ENCODE measurements at regions of chr1 and their contacts with region 1.

Region 1: DNA sequence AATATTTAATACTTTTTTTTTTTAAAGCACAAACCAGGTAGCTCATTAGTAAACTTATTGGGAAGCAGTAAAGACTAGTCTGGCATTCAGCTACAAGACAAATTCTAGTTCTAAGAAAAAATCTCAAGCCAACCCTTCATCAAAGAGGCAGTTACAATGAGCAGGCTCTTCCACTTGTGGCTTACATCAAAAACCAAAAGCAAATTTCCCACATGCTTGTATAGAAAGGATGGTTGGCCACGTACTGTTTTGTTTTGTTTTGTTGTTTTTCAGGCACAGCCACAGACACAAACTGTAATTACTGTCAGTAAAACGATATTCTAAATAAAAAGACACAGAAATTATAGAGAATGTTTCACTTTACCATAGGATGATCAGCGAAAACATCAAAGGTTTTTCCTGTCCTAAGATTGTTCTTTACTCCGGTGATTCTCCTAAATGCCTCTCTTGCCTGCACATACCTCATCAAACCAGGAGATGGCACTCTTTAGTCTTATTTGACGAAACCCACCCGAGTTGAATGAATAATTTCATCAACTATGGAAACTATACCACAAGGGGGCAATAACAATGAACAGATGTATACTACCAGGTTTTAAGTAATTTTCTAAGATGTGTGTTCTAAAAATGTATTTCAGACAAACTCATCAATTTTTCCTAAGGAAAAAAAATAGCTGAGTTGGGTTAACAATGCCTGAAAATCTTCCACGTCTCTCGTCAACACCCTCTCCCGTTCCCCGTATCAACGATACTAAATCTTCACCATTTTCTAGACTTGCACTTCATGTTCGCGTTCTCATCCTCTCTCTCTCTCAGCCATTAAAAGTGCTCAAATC is 26.9 kb downstream of the RPL5 start:
- DNase-seq: peak; percentile 39
- H3K4me3 Mint-ChIP-seq: peak overlapping the region; percentile 7
- H3K27ac Mint-ChIP-seq: peak overlapping the region; percentile 0
- H3K4me1 Mint-ChIP-seq: peaks cover 19% of the 10 kb centered on the region
- H3K27me3 Mint-ChIP-seq: no peaks in the 10 kb centered on the region

Region 2: DNA sequence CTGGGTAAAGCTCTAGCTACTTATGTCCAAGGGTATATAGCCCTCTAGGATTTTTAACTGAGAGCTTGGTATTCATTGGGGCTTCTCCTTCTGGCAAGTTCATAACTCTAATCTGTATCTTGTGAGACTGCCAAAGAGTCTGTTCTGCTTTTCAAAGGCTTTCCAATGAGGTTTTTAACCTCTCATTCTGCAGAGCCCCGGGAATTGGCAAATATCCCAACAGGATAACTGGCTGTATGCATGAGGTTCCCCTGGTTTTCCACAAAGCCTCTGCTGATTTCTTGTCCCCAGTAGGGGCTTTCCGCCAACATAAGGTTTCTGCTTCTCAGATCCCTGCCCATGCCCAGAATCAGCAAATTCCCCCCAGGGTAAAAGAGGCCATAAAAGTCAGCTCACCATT is 13.9 kb after region 1 on chr1:
- CTCF ChIA-PET with region 1: interaction called, 20 read pairs
- POLR2A ChIA-PET with region 1: no interaction called
- intact Hi-C with region 1: loop called (anchors 1 kb)
- DNase-seq: no peak
- H3K4me3 Mint-ChIP-seq: no peak overlapping the region
- H3K27ac Mint-ChIP-seq: no peak overlapping the region
- H3K4me1 Mint-ChIP-seq: peaks cover 22% of the 10 kb centered on the region
- H3K27me3 Mint-ChIP-seq: no peaks in the 10 kb centered on the region

Region 3: DNA sequence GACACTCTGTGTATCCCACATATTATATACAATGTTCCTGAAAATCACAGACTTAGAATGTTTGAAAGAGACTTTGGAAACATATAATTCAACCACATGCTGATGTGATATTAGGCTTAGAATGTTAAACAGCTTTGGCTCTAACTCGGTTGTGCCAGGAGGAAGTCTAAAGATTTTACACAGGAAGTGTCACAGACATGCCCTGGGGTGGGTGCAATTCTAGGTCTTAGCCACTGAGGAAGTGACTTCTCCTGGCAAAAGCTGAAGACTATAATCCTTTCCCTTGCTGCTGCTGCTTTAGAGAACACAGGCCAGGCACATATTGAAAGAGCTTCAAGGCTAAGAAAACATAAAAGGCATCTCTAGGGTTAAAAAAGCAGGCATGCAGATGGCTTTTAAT is 24.0 kb after region 1 on chr1:
- CTCF ChIA-PET with region 1: interaction called, 20 read pairs
- POLR2A ChIA-PET with region 1: no interaction called
- intact Hi-C with region 1: no loop called
- DNase-seq: peak; percentile 42
- H3K4me3 Mint-ChIP-seq: no peak overlapping the region
- H3K27ac Mint-ChIP-seq: peak overlapping the region; percentile 64
- H3K4me1 Mint-ChIP-seq: peaks cover 32% of the 10 kb centered on the region
- H3K27me3 Mint-ChIP-seq: no peaks in the 10 kb centered on the region

Region 4: DNA sequence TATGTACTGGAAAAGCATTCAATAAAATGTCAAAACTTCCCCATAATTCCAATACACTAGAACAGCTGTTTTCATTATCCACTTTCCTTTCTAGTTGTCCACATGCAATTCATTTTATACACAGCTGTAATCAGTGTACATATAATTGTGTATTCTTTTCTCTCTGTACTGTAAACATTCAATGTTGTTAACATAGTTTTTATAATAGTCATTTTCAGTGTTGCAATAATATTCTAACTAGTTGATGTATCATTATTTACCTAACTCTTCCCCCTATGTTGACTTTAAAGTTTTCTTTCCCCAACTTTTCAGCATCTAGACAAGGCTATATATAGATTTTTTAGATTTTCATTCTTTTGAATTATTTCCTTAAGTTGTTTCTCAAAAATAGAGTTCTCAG is 58.1 kb after region 1 on chr1:
- CTCF ChIA-PET with region 1: no interaction called
- POLR2A ChIA-PET with region 1: no interaction called
- intact Hi-C with region 1: no loop called
- DNase-seq: no peak
- H3K4me3 Mint-ChIP-seq: no peak overlapping the region
- H3K27ac Mint-ChIP-seq: no peak overlapping the region
- H3K4me1 Mint-ChIP-seq: peaks cover 7% of the 10 kb centered on the region
- H3K27me3 Mint-ChIP-seq: no peaks in the 10 kb centered on the region

Region 5: GRCh38 chr1:92960395-92961130 is 101.8 kb after region 1 on chr1:
- CTCF ChIA-PET with region 1: interaction called, 172 read pairs
- POLR2A ChIA-PET with region 1: interaction called, 3 read pairs
- intact Hi-C with region 1: loop called (anchors 1 kb)
- DNase-seq: peak; percentile 75
- H3K4me3 Mint-ChIP-seq: peak overlapping the region; percentile 88
- H3K27ac Mint-ChIP-seq: peak overlapping the region; percentile 96
- H3K4me1 Mint-ChIP-seq: peaks cover 39% of the 10 kb centered on the region
- H3K27me3 Mint-ChIP-seq: no peaks in the 10 kb centered on the region

Region 6: GRCh38 chr1:92975551-92976232 is 116.9 kb after region 1 on chr1:
- CTCF ChIA-PET with region 1: interaction called, 13 read pairs
- POLR2A ChIA-PET with region 1: no interaction called
- intact Hi-C with region 1: no loop called
- DNase-seq: peak; percentile 51
- H3K4me3 Mint-ChIP-seq: no peak overlapping the region
- H3K27ac Mint-ChIP-seq: peak overlapping the region; percentile 62
- H3K4me1 Mint-ChIP-seq: peaks cover 63% of the 10 kb centered on the region
- H3K27me3 Mint-ChIP-seq: no peaks in the 10 kb centered on the region

Region 7: DNA sequence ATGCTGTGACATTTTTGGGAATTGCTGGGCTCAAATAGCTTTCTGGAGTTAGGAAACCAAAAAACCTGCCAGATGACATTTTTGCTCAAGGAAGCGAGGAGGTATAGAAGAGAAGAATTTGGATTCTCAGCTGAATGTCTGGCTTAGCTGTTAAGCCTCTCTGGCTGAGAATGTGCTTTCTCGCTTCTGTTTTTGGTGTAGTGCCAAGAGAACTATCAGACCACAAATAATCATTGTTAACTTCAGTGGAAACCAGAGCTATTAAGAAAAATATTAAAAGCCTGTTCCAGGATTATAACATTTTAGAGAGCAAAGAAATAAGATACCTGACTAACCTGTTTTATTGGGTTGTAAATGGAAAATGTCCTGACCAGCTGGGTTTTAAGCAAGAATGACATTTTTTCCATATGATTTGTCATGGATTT is 142.0 kb after region 1 on chr1:
- CTCF ChIA-PET with region 1: interaction called, 35 read pairs
- POLR2A ChIA-PET with region 1: no interaction called
- intact Hi-C with region 1: no loop called
- DNase-seq: no peak
- H3K4me3 Mint-ChIP-seq: no peak overlapping the region
- H3K27ac Mint-ChIP-seq: no peak overlapping the region
- H3K4me1 Mint-ChIP-seq: peaks cover 4% of the 10 kb centered on the region
- H3K27me3 Mint-ChIP-seq: peaks cover 9% of the 10 kb centered on the region

Measured in activated CD4-positive, alpha-beta memory T cell treated with anti-CD3 and anti-CD28 coated beads for 36 hours (primary cell).